Caco-2 (cell line): ENCODE measurements at regions of chr5 and their contacts with region 1.

Region 1: DNA sequence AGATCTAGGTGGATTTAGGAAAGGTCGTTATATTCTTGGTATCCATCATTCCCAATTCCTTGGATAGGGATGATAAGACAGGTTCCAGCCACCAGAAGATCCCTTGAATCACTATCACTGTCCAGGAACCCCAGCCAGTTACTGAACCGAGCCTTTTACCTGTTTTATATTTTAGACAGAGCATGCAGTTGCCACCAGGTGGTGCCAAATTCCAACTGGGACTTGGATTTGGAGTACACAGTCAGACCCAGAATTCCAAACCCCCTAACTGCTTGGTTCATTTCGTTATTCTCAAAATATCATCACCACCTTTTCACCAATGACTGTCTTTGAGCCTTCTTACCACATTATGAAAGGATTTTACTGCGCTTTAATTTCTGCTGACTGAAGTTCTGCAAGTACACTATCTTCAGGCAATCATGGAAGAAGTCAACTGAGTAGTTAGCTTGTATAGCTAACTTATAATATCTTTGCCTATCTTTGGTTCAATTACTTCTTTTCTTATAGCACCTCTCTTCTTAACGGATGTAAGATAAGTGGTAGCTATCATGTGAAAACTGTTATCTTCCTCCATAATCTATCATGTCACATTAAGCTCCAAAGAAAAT is 191.8 kb downstream of the PRR16 start:
- DNase-seq: peak; percentile 51 to 62
- H3K4me3 ChIP-seq: no peak overlapping the region
- H3K4me3 Mint-ChIP-seq: no peak overlapping the region
- H3K27ac Mint-ChIP-seq: no peak overlapping the region
- H3K4me1 ChIP-seq: no peaks in the 10 kb centered on the region
- H3K4me1 Mint-ChIP-seq: no peaks in the 10 kb centered on the region
- H3K27me3 ChIP-seq: no peaks in the 10 kb centered on the region
- H3K27me3 Mint-ChIP-seq: peaks cover 2% of the 10 kb centered on the region
- CTCF ChIP-seq: peak; percentile 63 to 75

Region 2: GRCh38 chr5:120507800-120508463 is 148.0 kb before region 1 on chr5:
- CTCF ChIA-PET with region 1: no interaction called
- POLR2A ChIA-PET with region 1: no interaction called
- intact Hi-C with region 1: no loop called
- DNase-seq: no peak
- H3K4me3 ChIP-seq: no peak overlapping the region
- H3K4me3 Mint-ChIP-seq: no peak overlapping the region
- H3K27ac Mint-ChIP-seq: no peak overlapping the region
- H3K4me1 ChIP-seq: no peaks in the 10 kb centered on the region
- H3K4me1 Mint-ChIP-seq: no peaks in the 10 kb centered on the region
- H3K27me3 ChIP-seq: no peaks in the 10 kb centered on the region
- H3K27me3 Mint-ChIP-seq: peaks cover 3% of the 10 kb centered on the region
- CTCF ChIP-seq: no peak

Region 3: GRCh38 chr5:120734033-120734432 is 78.1 kb after region 1 on chr5:
- CTCF ChIA-PET with region 1: no interaction called
- POLR2A ChIA-PET with region 1: no interaction called
- intact Hi-C with region 1: loop called (anchors 2 kb)
- DNase-seq: no peak
- H3K4me3 ChIP-seq: no peak overlapping the region
- H3K4me3 Mint-ChIP-seq: no peak overlapping the region
- H3K27ac Mint-ChIP-seq: no peak overlapping the region
- H3K4me1 ChIP-seq: no peaks in the 10 kb centered on the region
- H3K4me1 Mint-ChIP-seq: no peaks in the 10 kb centered on the region
- H3K27me3 ChIP-seq: no peaks in the 10 kb centered on the region
- H3K27me3 Mint-ChIP-seq: peaks cover 4% of the 10 kb centered on the region
- CTCF ChIP-seq: no peak

Region 4: GRCh38 chr5:120803282-120803681 is 147.3 kb after region 1 on chr5:
- CTCF ChIA-PET with region 1: no interaction called
- POLR2A ChIA-PET with region 1: no interaction called
- intact Hi-C with region 1: loop called (anchors 1 kb)
- DNase-seq: no peak
- H3K4me3 ChIP-seq: no peak overlapping the region
- H3K4me3 Mint-ChIP-seq: no peak overlapping the region
- H3K27ac Mint-ChIP-seq: no peak overlapping the region
- H3K4me1 ChIP-seq: no peaks in the 10 kb centered on the region
- H3K4me1 Mint-ChIP-seq: no peaks in the 10 kb centered on the region
- H3K27me3 ChIP-seq: no peaks in the 10 kb centered on the region
- H3K27me3 Mint-ChIP-seq: peaks cover 5% of the 10 kb centered on the region
- CTCF ChIP-seq: peak in 1 of 2 experiments; percentile 24

Region 5: DNA sequence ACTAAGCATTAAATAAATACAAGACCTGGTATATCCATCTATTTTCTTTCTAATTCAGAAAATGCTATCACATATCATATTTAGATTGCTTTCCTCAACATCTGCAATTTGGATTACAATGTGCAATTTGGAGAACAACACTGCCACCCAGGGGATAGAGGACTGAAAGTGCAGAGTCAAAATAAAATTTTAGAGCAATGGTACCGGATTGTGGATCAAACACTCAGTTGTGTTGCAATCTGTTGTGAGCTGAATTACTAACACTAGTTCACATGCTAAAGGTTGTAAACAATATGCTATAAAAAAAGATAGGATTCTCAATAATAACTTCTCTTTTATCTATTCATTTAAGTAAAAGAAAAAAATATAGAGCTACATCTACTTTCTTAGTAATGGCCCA is 1293.9 kb after region 1 on chr5:
- CTCF ChIA-PET with region 1: no interaction called
- POLR2A ChIA-PET with region 1: no interaction called
- intact Hi-C with region 1: loop called (anchors 2 kb)
- DNase-seq: peak; percentile 45 to 65
- H3K4me3 ChIP-seq: no peak overlapping the region
- H3K4me3 Mint-ChIP-seq: no peak overlapping the region
- H3K27ac Mint-ChIP-seq: no peak overlapping the region
- H3K4me1 ChIP-seq: no peaks in the 10 kb centered on the region
- H3K4me1 Mint-ChIP-seq: no peaks in the 10 kb centered on the region
- H3K27me3 ChIP-seq: no peaks in the 10 kb centered on the region
- H3K27me3 Mint-ChIP-seq: no peaks in the 10 kb centered on the region
- CTCF ChIP-seq: peak; percentile 64 to 77

Region 6: GRCh38 chr5:122101636-122102285 is 1445.8 kb after region 1 on chr5:
- CTCF ChIA-PET with region 1: no interaction called
- POLR2A ChIA-PET with region 1: no interaction called
- intact Hi-C with region 1: loop called (anchors 5 kb)
- DNase-seq: peak in 1 of 2 experiments; percentile 22
- H3K4me3 ChIP-seq: no peak overlapping the region
- H3K4me3 Mint-ChIP-seq: no peak overlapping the region
- H3K27ac Mint-ChIP-seq: no peak overlapping the region
- H3K4me1 ChIP-seq: no peaks in the 10 kb centered on the region
- H3K4me1 Mint-ChIP-seq: no peaks in the 10 kb centered on the region
- H3K27me3 ChIP-seq: no peaks in the 10 kb centered on the region
- H3K27me3 Mint-ChIP-seq: peaks cover 3% of the 10 kb centered on the region
- CTCF ChIP-seq: peak; percentile 51 to 64